WTC11 (cell line): ENCODE measurements at regions of chr17 and their contacts with region 1.

Region 1: GRCh38 chr17:8057691-8058114 is 18.8 kb downstream of the ALOX15B start:
- DNase-seq: peak; percentile 47
- ATAC-seq: peak; percentile 87
- H3K4me3 Mint-ChIP-seq: peak overlapping the region; percentile 32; the same call in 1 of the 2 replicates
- H3K27ac Mint-ChIP-seq: no peak overlapping the region
- H3K4me1 Mint-ChIP-seq: peaks cover 38% of the 10 kb centered on the region
- H3K27me3 Mint-ChIP-seq: peaks cover 38% of the 10 kb centered on the region
- CTCF ChIP-seq: peak; percentile 62

Region 2: DNA sequence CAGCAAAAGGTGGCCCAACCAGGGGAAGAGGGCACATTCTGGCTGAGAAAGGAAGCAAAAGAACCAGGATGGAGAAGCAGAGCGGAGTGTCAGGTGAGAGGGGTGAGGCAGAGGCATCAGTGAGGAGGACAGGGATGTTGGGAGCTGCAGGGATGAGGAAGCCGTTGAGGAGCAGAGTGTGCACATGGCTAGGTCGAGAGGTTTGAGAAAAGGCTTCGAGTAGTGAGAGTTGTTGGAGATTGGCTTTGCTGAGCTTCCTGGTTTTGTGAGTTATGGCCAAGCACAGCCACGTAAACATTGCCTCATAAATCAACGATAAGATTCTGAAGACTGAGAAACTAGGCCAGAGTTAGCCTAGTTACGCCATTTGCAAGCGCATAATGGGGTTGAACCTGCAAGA is 313.3 kb before region 1 on chr17:
- CTCF ChIA-PET with region 1: interaction called, 15 read pairs
- POLR2A ChIA-PET with region 1: no interaction called
- DNase-seq: no peak
- ATAC-seq: no peak
- H3K4me3 Mint-ChIP-seq: no peak overlapping the region
- H3K27ac Mint-ChIP-seq: no peak overlapping the region
- H3K4me1 Mint-ChIP-seq: no peaks in the 10 kb centered on the region
- H3K27me3 Mint-ChIP-seq: peaks cover 12% of the 10 kb centered on the region
- CTCF ChIP-seq: no peak

Region 3: DNA sequence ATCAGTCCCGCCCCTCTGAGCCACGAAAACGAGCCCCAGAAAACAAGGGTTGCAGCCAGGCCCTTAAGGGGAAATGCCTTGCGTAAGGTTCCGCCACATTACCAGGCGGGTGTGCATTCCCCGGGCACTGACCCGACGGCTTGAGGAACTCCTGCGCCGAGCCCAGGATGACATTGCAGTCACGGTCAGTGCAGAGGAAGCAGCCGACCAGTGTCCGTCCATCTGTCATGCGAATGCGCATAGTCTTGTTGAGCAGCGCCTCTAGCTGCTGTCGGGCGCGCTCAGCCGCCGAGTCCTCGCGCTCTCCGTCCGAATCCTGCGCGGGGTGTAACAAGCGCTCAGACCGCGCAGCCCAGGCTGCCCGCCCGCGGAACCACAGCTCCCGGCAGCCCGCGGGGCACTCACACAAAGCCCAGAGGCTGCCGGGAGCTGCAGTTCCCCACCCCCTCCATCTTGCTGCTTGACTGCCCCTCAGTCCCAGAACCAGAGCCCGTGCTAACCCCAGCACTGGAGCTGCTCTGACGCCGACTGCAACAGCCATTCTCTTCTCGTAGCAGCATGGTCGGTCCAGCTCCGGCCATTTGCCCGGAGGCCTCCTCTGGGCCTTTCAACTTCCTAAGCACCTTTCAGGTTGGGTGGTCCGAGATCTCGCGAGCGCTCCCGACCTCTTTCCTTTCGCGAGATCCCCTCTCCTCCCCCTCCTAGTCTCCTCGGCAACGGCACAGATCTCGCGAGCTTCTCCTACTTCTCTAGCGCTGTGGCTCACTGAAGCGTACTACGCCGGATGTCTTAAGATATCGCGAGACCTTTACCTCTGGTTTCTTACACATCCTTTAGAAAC is 200.6 kb before region 1 on chr17 and contains the start of gene NAA38:
- CTCF ChIA-PET with region 1: interaction called, 11 read pairs
- POLR2A ChIA-PET with region 1: no interaction called
- DNase-seq: peak; percentile 96
- ATAC-seq: peak; percentile 84
- H3K4me3 Mint-ChIP-seq: no peak within 1 kb of the TSS
- H3K27ac Mint-ChIP-seq: no peak within 1 kb of the TSS
- H3K4me1 Mint-ChIP-seq: peaks cover 21% of the 10 kb centered on the region
- H3K27me3 Mint-ChIP-seq: peaks cover 19% of the 10 kb centered on the region
- CTCF ChIP-seq: no peak
- total RNA-seq, gene NAA38: 41.8 to 46.3 TPM (median 43.4 TPM) in 3 replicates

Region 4: GRCh38 chr17:7997186-7997585 is 60.5 kb before region 1 on chr17:
- CTCF ChIA-PET with region 1: interaction called, 10 read pairs
- POLR2A ChIA-PET with region 1: no interaction called
- DNase-seq: peak; percentile 69
- ATAC-seq: peak; percentile 92
- H3K4me3 Mint-ChIP-seq: no peak overlapping the region
- H3K27ac Mint-ChIP-seq: peak overlapping the region; percentile 27; the same call in 1 of the 2 replicates
- H3K4me1 Mint-ChIP-seq: peaks cover 9% of the 10 kb centered on the region
- H3K27me3 Mint-ChIP-seq: peaks cover 26% of the 10 kb centered on the region
- CTCF ChIP-seq: 0 out of 2 replicates have a peak, but pooled peaks have one; percentile 19

Region 5: DNA sequence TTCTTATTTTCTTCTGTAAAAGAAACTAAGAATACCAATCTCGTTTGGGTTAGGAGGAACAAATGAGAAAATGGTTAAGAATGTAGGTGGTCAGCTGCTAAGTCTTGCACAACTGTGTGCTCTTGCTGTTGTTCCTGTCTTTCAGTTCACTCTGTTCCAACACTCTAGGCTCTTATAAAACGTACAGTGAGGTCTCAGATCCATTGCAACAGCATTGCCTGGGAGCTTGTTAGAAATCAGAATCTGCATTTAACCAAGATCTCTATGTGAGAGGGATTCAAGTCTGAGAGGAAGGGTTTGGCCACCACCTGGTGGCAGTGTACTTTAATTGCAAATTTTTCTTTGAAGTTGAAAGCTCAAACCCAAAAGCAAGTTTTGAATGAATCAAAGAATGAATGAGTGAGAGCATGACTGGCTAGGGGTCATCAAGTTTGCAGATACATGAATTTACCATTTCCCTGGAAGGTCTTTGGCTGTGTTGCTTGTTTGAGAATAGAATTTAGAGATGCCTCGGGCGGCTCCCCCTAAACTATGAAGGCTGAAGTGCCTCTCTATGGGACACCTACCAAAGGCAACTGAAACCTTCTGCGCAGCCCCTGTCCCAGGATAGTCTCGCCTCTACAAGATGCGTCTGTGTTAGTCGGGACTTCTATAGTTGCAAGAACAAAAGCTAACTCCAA is 16.3 kb before region 1 on chr17:
- CTCF ChIA-PET with region 1: interaction called, 28 read pairs
- POLR2A ChIA-PET with region 1: no interaction called
- DNase-seq: no peak
- ATAC-seq: peak; percentile 16; the same call in 1 of the 2 replicates
- H3K4me3 Mint-ChIP-seq: no peak overlapping the region
- H3K27ac Mint-ChIP-seq: no peak overlapping the region
- H3K4me1 Mint-ChIP-seq: peaks cover 22% of the 10 kb centered on the region
- H3K27me3 Mint-ChIP-seq: peaks cover 14% of the 10 kb centered on the region
- CTCF ChIP-seq: 0 out of 2 replicates have a peak, but pooled peaks have one; percentile 21

Region 6: DNA sequence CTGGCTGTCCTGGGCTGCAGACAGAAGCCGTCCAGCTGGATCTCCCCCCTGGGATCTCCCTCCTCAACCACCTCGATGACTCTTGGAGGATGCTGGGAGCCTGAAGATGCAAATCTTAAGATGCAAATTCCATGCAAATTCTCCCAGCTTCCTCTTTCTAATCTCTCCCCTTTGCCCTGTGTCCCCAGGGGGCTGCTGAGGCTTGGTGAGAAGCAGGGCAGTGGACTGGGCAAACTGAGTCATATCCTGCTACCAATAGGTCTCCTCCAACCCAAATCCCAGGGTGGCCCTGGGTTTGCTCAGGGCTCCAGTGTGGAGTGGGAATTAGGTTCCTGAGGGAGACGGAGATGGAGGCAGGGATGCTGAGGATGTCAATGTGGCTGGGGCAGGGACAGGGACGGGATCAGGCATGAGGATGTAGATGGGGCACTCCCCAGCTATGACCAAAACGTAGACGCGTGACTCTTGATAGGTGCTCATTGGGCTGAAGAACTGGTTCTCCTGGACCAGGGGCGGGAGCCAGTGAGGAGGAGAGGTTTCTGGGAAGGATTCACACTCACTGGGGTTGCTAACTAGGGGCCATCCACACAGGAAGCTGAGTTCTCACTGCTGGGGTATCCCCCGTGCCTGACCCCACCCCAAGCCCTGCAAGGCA is 33.5 kb after region 1 on chr17:
- CTCF ChIA-PET with region 1: interaction called, 62 read pairs
- POLR2A ChIA-PET with region 1: no interaction called
- DNase-seq: no peak
- ATAC-seq: no peak; the same call in 1 of the 2 replicates
- H3K4me3 Mint-ChIP-seq: no peak overlapping the region
- H3K27ac Mint-ChIP-seq: no peak overlapping the region
- H3K4me1 Mint-ChIP-seq: peaks cover 16% of the 10 kb centered on the region
- H3K27me3 Mint-ChIP-seq: peaks cover 34% of the 10 kb centered on the region
- CTCF ChIP-seq: no peak

Region 7: DNA sequence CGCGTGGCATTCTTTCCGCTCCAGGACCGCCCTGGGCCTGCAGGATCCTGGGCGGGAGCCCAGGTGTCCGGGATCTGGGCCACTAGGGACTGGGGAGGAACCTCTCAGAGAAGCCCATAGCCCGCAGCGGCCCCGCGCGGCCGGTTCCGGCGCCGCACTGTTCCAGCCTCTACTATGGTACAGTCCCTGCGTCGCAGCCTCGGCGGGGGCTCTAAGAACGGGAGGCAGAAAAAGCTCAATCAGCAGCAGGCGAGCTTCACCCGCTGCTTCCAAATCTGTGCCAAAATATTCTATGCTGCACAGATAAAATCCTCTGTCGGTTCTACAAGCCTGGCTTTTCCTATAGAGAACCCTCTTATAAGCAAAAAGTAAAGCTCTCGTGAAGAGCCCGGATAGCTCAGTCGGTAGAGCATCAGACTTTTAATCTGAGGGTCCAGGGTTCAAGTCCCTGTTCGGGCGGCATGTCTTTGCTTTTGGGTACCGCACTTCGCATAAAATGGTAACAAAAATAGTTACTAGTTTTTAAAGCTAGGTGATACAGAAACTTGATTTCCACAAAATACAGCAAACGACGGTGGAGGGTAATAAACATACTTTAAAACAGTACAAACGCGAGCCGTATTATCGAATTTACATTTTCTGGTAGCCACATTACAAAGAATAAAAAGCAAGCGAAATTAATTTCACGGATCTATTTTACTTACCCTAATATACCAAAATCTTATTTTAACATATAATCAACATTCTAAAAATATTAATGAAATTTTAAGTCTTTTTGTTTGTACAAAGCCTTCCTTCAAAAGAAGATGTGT is 61.3 kb after region 1 on chr17:
- CTCF ChIA-PET with region 1: interaction called, 118 read pairs
- POLR2A ChIA-PET with region 1: interaction called, 4 read pairs
- DNase-seq: peak; percentile 91
- ATAC-seq: peak; percentile 44
- H3K4me3 Mint-ChIP-seq: peak overlapping the region; percentile 85
- H3K27ac Mint-ChIP-seq: 0 out of 2 replicates have a peak overlapping the region, but pooled peaks have one; percentile 69
- H3K4me1 Mint-ChIP-seq: peaks cover 9% of the 10 kb centered on the region
- H3K27me3 Mint-ChIP-seq: peaks cover 73% of the 10 kb centered on the region
- CTCF ChIP-seq: peak; percentile 41; the same call in 1 of the 2 replicates

Region 8: GRCh38 chr17:8237175-8237574 is 179.5 kb after region 1 on chr17:
- CTCF ChIA-PET with region 1: no interaction called
- POLR2A ChIA-PET with region 1: no interaction called
- DNase-seq: no peak
- ATAC-seq: no peak
- H3K4me3 Mint-ChIP-seq: no peak overlapping the region
- H3K27ac Mint-ChIP-seq: no peak overlapping the region
- H3K4me1 Mint-ChIP-seq: no peaks in the 10 kb centered on the region
- H3K27me3 Mint-ChIP-seq: no peaks in the 10 kb centered on the region
- CTCF ChIP-seq: no peak